MCF 10A (cell line): ENCODE measurements at regions of chr3 and their contacts with region 1.

Region 1: GRCh38 chr3:113736548-113737089 is 9.4 kb downstream of the NAA50 start:
- DNase-seq: peak; percentile 68
- H3K4me3 Mint-ChIP-seq: no peak overlapping the region
- H3K27ac Mint-ChIP-seq: peak overlapping the region; percentile 59
- H3K4me1 Mint-ChIP-seq: peaks cover 52% of the 10 kb centered on the region
- H3K27me3 Mint-ChIP-seq: no peaks in the 10 kb centered on the region
- CTCF ChIP-seq: peak; percentile 57

Region 2: DNA sequence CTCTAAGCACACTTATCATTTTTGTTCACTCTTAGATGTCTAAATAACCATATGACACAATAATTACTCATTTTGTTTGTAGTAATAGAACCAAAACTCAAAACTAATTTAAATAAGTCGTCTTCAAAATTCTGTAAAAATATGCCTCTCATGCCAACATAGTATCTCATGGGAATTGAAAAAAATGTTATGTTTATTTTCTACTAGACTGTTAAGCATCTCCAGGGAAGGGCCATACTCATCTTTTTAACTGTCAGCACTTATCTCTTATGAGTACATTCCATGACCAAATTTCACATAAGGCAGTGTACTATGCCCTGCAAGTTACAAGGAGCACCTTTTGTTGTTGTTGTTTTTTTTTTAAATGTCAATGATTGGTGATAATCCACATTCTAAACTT is 21.9 kb before region 1 on chr3:
- CTCF ChIA-PET with region 1: interaction called, 15 read pairs
- POLR2A ChIA-PET with region 1: interaction called, 6 read pairs
- intact Hi-C with region 1: no loop called
- DNase-seq: no peak
- H3K4me3 Mint-ChIP-seq: no peak overlapping the region
- H3K27ac Mint-ChIP-seq: no peak overlapping the region
- H3K4me1 Mint-ChIP-seq: peaks cover 6% of the 10 kb centered on the region
- H3K27me3 Mint-ChIP-seq: no peaks in the 10 kb centered on the region
- CTCF ChIP-seq: no peak

Region 3: DNA sequence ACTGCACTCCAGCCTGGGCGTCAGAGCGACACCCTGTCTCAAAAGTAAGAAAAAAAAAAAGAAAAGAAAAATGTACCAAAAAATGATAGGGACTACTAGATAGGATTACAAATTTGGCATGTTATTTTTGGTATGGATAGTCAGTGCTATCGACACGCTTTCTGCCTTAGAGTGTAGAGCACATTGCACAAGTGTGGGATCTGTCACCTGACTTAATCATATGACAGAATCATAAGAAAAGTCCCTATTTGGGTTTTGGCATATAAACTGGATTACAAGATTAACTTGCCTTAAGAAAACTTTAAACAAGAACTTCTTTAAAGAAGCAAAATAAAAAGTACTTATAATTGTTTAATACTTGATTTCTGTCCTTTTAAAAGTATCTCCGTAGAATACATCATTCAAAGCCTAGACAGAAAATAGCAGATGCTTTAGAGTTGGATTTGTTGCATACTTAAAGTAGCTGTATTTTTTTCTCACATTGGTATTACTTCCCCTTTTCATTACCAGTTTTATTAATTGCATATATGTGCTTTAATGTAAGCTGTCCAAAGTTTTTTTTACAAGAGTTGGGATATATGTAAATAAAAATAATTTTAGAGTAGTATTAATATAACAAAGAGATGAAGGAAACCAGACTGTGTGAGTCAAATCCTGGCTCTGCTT is 18.0 kb after region 1 on chr3:
- CTCF ChIA-PET with region 1: interaction called, 18 read pairs
- POLR2A ChIA-PET with region 1: interaction called, 10 read pairs
- intact Hi-C with region 1: no loop called
- DNase-seq: no peak
- H3K4me3 Mint-ChIP-seq: no peak overlapping the region
- H3K27ac Mint-ChIP-seq: peak overlapping the region; percentile 61
- H3K4me1 Mint-ChIP-seq: peaks cover 3% of the 10 kb centered on the region
- H3K27me3 Mint-ChIP-seq: no peaks in the 10 kb centered on the region
- CTCF ChIP-seq: no peak

Region 4: DNA sequence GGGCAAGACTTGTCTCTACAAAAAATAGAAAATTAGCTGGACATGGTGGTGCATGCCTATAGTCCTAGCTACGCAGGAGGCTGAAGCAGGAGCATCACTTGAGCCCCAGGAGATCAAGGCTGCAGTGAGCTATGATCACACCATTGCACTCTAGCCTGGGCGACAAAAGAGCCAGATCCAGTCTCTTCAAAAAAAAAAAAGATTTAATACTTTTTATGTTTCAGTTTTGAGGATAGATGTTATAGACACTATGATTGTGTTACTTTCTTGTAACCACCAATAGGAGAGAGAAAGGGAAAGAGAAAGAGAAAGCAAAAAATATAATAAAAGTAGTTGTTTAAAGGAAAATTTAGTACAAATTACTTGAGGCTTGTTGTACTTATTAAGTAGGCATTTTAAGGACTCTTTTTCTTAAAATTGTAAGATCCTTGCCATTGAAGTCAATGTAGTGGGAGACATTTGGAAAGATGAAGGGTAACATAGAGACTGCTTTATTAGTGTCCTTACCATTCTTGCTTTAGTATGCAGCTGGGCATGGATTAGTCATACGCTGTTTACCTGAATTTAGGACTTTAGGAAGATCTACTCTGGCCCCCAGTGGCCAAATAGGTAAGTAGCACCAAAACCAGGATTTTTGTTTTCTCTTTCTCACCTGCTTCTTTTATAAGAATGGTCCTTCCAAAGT is 176.1 kb after region 1 on chr3:
- CTCF ChIA-PET with region 1: interaction called, 21 read pairs
- POLR2A ChIA-PET with region 1: no interaction called
- intact Hi-C with region 1: loop called (anchors 1 kb)
- DNase-seq: peak; percentile 82
- H3K4me3 Mint-ChIP-seq: no peak overlapping the region
- H3K27ac Mint-ChIP-seq: no peak overlapping the region
- H3K4me1 Mint-ChIP-seq: no peaks in the 10 kb centered on the region
- H3K27me3 Mint-ChIP-seq: no peaks in the 10 kb centered on the region
- CTCF ChIP-seq: peak; percentile 63